ENCODE measurements at regions of chr22 and their contacts with region 1.

Region 1: DNA sequence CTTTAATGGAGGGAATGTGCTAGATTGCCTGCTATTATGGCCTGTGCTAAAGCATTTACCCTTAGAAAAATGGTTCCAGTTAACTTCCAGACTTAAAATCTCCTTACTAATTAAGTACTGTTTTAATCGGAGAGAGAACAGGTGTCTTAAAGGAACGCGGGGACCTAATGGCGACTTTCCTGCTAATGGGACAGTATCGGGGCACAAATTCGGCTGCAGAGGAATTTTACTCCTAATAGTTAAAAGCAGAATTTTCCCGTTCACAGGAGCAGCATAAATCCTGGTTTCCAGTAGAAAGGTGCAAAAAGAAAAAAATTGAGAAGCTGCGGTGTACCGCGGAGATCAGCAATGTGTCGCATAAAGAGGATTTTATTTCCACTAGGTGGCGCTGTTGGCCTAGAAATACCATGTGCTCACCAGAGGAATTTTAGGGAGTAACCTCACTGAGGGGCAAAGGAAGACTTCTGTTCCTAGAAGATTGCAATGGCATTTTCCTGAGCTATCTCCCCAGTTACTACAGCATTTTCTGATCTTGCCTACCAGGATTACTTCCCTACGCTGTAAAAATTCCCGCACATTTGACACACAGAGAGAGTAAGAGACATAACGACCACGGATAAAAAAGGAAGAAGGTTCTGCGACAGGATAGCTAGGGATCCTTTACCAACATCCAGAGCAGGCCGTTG is 44.5 kb downstream of the ZNF280B start:
- DNase-seq: peak; percentile 54
- H3K4me3 ChIP-seq: no peak overlapping the region
- H3K27ac ChIP-seq: no peak overlapping the region
- H3K4me1 ChIP-seq: no peaks in the 10 kb centered on the region
- H3K27me3 ChIP-seq: peaks cover 0 to 4% of the 10 kb centered on the region in 2 experiments
- CTCF ChIP-seq: peak; percentile 48 to 51
- POLR2A ChIP-seq: no peak

Region 2: DNA sequence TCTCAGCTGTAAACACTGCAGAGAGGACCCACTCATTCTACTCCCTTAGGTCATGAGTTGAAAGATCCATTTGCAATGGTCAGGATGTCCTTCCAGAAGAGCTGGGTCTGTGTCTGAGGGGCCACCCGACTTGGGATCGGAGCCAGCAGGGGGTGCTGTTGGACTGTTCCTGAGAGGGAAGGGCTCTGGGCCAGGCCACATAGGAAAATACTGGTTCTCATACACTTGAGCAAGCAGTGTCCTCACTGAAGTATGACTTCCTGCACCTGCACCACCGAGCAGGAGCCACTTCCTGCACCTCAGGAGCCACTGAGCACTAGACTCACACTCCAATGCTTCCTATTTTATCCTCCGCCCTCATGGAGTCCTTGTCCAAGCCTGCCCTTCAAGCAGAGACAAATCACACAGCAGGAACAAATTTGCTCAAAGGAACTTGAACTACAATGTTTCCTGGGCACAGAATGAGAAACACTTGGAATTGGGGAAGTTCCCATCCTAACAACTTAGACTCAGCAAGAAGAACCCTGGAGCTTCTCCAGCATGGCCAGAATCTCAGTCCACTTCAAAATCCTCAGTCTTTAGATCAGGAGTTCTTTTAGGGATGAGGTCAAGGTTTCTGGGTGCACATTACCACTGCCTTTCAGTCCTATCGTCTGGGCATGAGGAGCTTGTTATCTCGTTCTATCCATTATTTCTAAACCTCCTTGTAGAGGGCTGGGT is 256.0 kb before region 1 on chr22:
- CTCF ChIA-PET with region 1: interaction called, 3 read pairs
- POLR2A ChIA-PET with region 1: no interaction called
- dilution Hi-C with region 1: no loop called
- intact Hi-C with region 1: loop called (anchors 1 kb)
- DNase-seq: peak; percentile 68
- H3K4me3 ChIP-seq: no peak overlapping the region
- H3K27ac ChIP-seq: no peak overlapping the region
- H3K4me1 ChIP-seq: peaks cover 11% of the 10 kb centered on the region
- H3K27me3 ChIP-seq: peaks cover 6 to 22% of the 10 kb centered on the region in 2 experiments
- CTCF ChIP-seq: peak; percentile 79 to 80
- POLR2A ChIP-seq: no peak

Region 3: GRCh38 chr22:22431271-22432220 is 32.5 kb before region 1 on chr22:
- CTCF ChIA-PET with region 1: interaction called, 10 read pairs
- POLR2A ChIA-PET with region 1: no interaction called
- dilution Hi-C with region 1: no loop called
- intact Hi-C with region 1: no loop called
- DNase-seq: peak; percentile 52
- H3K4me3 ChIP-seq: no peak overlapping the region
- H3K27ac ChIP-seq: no peak overlapping the region
- H3K4me1 ChIP-seq: no peaks in the 10 kb centered on the region
- H3K27me3 ChIP-seq: peaks cover 2 to 10% of the 10 kb centered on the region in 2 experiments
- CTCF ChIP-seq: peak; percentile 55 to 74
- POLR2A ChIP-seq: no peak

Region 4: DNA sequence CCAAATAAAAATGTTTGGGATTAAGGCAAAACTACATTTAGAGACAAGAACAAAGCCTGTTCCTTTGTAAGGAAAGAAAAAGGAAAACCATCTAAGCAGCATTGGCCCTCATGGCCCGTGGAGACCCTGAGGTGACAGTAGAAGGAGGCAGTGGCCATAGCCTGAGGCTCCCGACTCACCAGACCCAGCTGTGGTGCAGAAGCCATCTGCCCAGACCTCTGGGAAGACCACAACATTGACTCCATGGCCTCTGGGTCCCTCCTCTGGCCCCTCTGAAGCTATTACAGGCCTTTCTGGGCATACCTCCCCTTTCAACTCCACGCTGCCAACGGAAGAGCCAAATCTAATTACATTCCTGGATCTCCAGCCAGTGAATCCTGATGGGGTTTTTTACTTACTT is 88.6 kb after region 1 on chr22:
- CTCF ChIA-PET with region 1: no interaction called
- POLR2A ChIA-PET with region 1: no interaction called
- dilution Hi-C with region 1: no loop called
- intact Hi-C with region 1: loop called (anchors 2 kb)
- DNase-seq: no peak
- H3K4me3 ChIP-seq: no peak overlapping the region
- H3K27ac ChIP-seq: no peak overlapping the region
- H3K4me1 ChIP-seq: no peaks in the 10 kb centered on the region
- H3K27me3 ChIP-seq: peaks cover 2 to 11% of the 10 kb centered on the region in 2 experiments
- CTCF ChIP-seq: no peak
- POLR2A ChIP-seq: no peak

Region 5: GRCh38 chr22:22591348-22592299 is 127.6 kb after region 1 on chr22:
- CTCF ChIA-PET with region 1: interaction called, 51 read pairs
- POLR2A ChIA-PET with region 1: no interaction called
- dilution Hi-C with region 1: no loop called
- intact Hi-C with region 1: loop called (anchors 2 kb)
- DNase-seq: no peak
- H3K4me3 ChIP-seq: no peak overlapping the region
- H3K27ac ChIP-seq: no peak overlapping the region
- H3K4me1 ChIP-seq: no peaks in the 10 kb centered on the region
- H3K27me3 ChIP-seq: no peaks in the 10 kb centered on the region
- CTCF ChIP-seq: peak in 1 of 2 donors; percentile 6
- POLR2A ChIP-seq: no peak

Region 6: GRCh38 chr22:22616636-22617035 is 152.6 kb after region 1 on chr22:
- CTCF ChIA-PET with region 1: no interaction called
- POLR2A ChIA-PET with region 1: no interaction called
- dilution Hi-C with region 1: no loop called
- intact Hi-C with region 1: no loop called
- DNase-seq: no peak
- H3K4me3 ChIP-seq: no peak overlapping the region
- H3K27ac ChIP-seq: no peak overlapping the region
- H3K4me1 ChIP-seq: no peaks in the 10 kb centered on the region
- H3K27me3 ChIP-seq: peaks cover 10 to 16% of the 10 kb centered on the region in 2 experiments
- CTCF ChIP-seq: no peak
- POLR2A ChIP-seq: no peak

Region 7: DNA sequence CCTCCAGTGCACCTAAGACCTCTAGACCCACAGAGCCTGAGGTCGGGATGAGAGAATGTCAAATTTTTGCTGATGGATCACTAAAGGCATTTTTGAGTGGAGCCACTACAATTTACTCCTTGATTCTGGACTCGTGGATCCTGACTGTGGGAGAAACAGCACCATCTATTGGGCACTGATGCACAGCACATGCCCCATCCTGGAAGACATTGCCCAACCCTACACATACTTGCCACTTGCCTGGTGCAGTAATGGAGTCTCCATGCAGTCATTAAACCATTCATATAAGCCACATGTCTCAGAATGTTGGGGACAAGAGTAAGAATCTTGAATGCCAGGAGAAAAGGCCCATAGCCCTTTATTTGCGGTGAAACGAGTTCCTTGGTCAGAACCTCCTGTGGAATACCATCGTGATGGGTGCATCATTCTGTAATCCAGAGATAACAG is 284.3 kb after region 1 on chr22:
- CTCF ChIA-PET with region 1: interaction called, 4 read pairs
- POLR2A ChIA-PET with region 1: no interaction called
- dilution Hi-C with region 1: no loop called
- intact Hi-C with region 1: loop called (anchors 1 kb)
- DNase-seq: peak; percentile 38
- H3K4me3 ChIP-seq: no peak overlapping the region
- H3K27ac ChIP-seq: no peak overlapping the region
- H3K4me1 ChIP-seq: no peaks in the 10 kb centered on the region
- H3K27me3 ChIP-seq: no peaks in the 10 kb centered on the region
- CTCF ChIP-seq: peak; percentile 68 to 77
- POLR2A ChIP-seq: no peak

Region 8: GRCh38 chr22:22959147-22959827 is 495.3 kb after region 1 on chr22:
- CTCF ChIA-PET with region 1: interaction called, 20 read pairs
- POLR2A ChIA-PET with region 1: no interaction called
- dilution Hi-C with region 1: no loop called
- intact Hi-C with region 1: no loop called
- DNase-seq: peak; percentile 71
- H3K4me3 ChIP-seq: no peak overlapping the region
- H3K27ac ChIP-seq: no peak overlapping the region
- H3K4me1 ChIP-seq: no peaks in the 10 kb centered on the region
- H3K27me3 ChIP-seq: peaks cover 9 to 17% of the 10 kb centered on the region in 2 experiments
- CTCF ChIP-seq: peak; percentile 70 to 81
- POLR2A ChIP-seq: no peak